ENCODE measurements at regions of chr9 and their contacts with region 1.

Region 1: GRCh38 chr9:128927731-128928411 is 7.1 kb downstream of the PHYHD1 start:
- DNase-seq: no peak
- H3K4me3 ChIP-seq: no peak overlapping the region
- H3K27ac ChIP-seq: no peak overlapping the region
- H3K4me1 ChIP-seq: peaks cover 4 to 22% (median 18%) of the 10 kb centered on the region in 4 donors
- H3K27me3 ChIP-seq: no peaks in the 10 kb centered on the region
- CTCF ChIP-seq: peak; percentile 87 to 94 (median 90)
- EP300 ChIP-seq: no peak
- POLR2A ChIP-seq: no peak

Region 2: GRCh38 chr9:128863647-128864046 is 64.2 kb before region 1 on chr9:
- intact Hi-C with region 1: loop called (anchors 1 kb)
- DNase-seq: no peak
- H3K4me3 ChIP-seq: no peak overlapping the region
- H3K27ac ChIP-seq: no peak overlapping the region
- H3K4me1 ChIP-seq: peaks cover 0 to 7% (median 4%) of the 10 kb centered on the region in 4 donors
- H3K27me3 ChIP-seq: no peaks in the 10 kb centered on the region
- CTCF ChIP-seq: peak; percentile 91 to 98 (median 98)
- EP300 ChIP-seq: no peak
- POLR2A ChIP-seq: no peak

Region 3: GRCh38 chr9:129451089-129452025 is 523.5 kb after region 1 on chr9:
- intact Hi-C with region 1: no loop called
- DNase-seq: no peak
- H3K4me3 ChIP-seq: no peak overlapping the region
- H3K27ac ChIP-seq: peak overlapping the region; percentile 56 to 73 (median 60)
- H3K4me1 ChIP-seq: peaks cover 10 to 23% (median 16%) of the 10 kb centered on the region in 4 donors
- H3K27me3 ChIP-seq: no peaks in the 10 kb centered on the region
- CTCF ChIP-seq: no peak
- EP300 ChIP-seq: no peak
- POLR2A ChIP-seq: no peak